ENCODE measurements at regions of chr14 and their contacts with region 1.

Region 1: GRCh38 chr14:33788123-33788620 is 162.7 kb downstream of the EGLN3 start:
- DNase-seq: no peak
- H3K4me3 ChIP-seq: no peak overlapping the region
- H3K27ac ChIP-seq: no peak overlapping the region
- H3K4me1 ChIP-seq: peaks cover 0 to 4% of the 10 kb centered on the region in 2 donors
- H3K27me3 ChIP-seq: no peaks in the 10 kb centered on the region
- CTCF ChIP-seq: no peak
- POLR2A ChIP-seq: no peak

Region 2: GRCh38 chr14:32576088-32576795 is 1211.9 kb before region 1 on chr14:
- intact Hi-C with region 1: loop called (anchors 10 kb)
- DNase-seq: peak in 1 of 2 donors; percentile 33
- H3K4me3 ChIP-seq: peak overlapping the region in 2 of 3 donors; percentile 8 to 55
- H3K27ac ChIP-seq: no peak overlapping the region
- H3K4me1 ChIP-seq: no peaks in the 10 kb centered on the region
- H3K27me3 ChIP-seq: no peaks in the 10 kb centered on the region
- CTCF ChIP-seq: peak; percentile 89 to 95 (median 90)
- POLR2A ChIP-seq: no peak

Measured in breast epithelium (tissue), 4 donors.